Cardiac septum (tissue), 1 donor: ENCODE measurements at regions of chr10 and their contacts with region 1.

Region 1: GRCh38 chr10:28532383-28533175 is at the start of gene WAC:
- DNase-seq: peak; percentile 98
- total RNA-seq, gene WAC: 98.9 TPM

Region 2: DNA sequence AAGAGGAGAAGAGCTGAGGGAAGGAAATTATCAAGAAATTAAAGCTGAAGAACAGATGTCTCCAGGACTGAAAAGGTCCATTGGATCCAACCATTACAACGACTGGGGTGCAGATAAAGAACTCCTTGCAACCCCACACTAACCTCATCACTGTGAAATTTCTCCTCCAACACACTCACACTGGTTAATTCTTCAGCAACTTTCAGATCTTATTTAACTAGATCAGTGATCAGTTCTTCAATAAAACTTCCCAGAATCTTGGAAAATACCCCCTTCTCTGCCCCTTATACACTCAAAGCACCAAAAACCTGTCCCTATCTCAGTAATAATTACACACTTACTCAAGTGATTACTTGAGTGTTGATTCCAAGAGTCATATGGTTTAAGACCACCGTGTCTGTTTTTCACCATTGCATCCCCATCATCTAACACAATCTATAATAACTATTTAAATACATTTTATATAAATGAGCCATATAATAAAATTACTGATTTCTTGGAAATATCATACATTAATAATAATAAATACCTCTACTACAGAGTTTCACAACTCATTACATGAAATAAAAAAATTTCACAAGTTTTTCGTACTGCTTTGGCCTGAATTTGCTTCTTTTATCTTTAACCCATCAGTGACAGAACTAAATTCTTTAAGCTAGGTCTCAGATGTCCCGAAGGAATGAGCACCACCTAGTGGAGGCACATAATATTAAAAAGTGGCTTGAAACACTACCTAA is 353.4 kb before region 1 on chr10:
- intact Hi-C with region 1: no loop called
- DNase-seq: no peak

Region 3: GRCh38 chr10:28317760-28318159 is 214.8 kb before region 1 on chr10:
- intact Hi-C with region 1: no loop called
- DNase-seq: no peak

Region 4: DNA sequence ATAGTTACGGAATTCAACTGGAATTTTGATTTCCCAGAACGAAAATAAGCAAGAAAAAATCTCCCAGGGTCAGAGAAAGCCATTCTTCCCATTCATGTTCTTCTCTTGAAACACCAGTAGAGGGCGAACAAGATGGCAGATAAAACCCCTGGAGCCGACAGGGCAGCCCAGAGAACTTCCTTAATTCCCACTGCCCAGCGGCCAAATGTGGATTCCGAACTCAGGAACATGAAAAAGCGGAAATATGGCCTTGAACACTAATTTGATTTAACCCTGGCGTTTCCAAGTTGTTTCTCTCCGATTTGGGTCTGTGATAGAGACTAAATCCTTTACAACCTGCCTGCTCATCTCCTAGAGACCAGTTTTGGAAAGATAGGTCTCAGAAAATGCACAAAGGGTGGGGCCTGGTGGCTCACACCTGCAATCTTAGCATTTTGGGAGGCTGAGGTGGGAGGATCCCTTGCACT is 100.3 kb before region 1 on chr10:
- intact Hi-C with region 1: loop called (anchors 10 kb)
- DNase-seq: peak; percentile 80

Region 5: DNA sequence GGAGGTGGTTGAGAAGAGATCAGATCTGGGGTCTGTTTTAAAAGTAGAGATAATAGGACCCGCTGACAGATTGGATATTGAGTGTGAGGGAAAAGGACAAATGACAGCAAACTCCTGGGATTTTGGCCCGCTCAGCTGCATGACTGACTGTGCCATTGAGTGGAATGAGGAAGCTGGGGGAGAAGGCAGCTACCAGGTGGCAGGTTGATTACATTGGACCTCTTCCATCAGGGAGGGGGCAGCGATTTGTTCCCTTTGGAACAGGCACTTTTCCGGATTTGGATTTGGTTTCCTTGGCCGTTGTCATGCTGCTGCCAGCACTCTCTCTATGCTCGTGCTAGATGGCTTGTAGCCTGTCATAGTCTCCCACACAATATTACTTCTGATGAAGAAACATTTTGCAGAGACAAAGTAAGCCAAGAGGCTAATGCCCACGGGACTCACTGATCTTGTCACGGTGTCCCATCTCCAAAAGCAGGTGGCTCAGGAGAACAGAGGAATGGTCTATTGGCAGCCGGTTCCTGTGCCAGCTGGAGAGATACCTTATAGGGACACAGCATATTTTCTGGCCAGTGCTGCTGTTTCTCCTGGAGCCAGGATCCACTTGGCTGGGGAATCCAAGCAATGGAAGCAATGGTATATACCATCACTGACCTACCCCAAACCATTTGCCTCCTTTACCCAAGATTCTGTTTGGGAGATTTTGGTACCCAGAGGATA is 68.7 kb before region 1 on chr10:
- intact Hi-C with region 1: no loop called
- DNase-seq: no peak

Region 6: DNA sequence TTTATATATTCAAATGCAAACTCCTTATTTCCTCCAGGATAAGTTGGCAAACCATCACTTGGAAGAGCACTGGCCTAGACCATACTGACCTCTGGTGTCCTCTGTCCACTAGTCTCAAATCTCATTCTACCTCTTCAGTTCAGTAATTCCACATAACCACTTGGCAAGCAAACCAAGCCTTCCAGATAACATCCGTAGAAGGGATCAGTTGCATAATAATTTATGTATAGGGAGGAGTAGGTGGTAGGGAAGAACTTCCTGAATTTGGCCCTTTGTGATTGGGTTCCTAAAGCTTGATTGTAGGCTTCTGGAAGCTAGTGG is 55.4 kb after region 1 on chr10:
- intact Hi-C with region 1: loop called (anchors 5 kb)
- DNase-seq: no peak